Activated T-helper 1 cell treated with anti-CD3 and anti-CD28 coated beads, Interleukin-12 subunit alpha, Interleukin-12 subunit beta, Interleukin-2, Interleukin-4 antibody, amounts not matched to agents 30 ng/mL and 10 ng/mL and 1 ng/mL, durations not matched to agents 14 hours and 24 hours and 36 hours (primary cell): ENCODE measurements at regions of chr9 and their contacts with region 1.

Region 1: GRCh38 chr9:126514047-126514821 is 99.5 kb upstream of the LMX1B start:
- DNase-seq: peak; percentile 42
- H3K4me3 Mint-ChIP-seq: no peak overlapping the region
- H3K27ac Mint-ChIP-seq: no peak overlapping the region
- H3K4me1 Mint-ChIP-seq: peaks cover 31% of the 10 kb centered on the region
- H3K27me3 Mint-ChIP-seq: peaks cover 67% of the 10 kb centered on the region

Region 2: DNA sequence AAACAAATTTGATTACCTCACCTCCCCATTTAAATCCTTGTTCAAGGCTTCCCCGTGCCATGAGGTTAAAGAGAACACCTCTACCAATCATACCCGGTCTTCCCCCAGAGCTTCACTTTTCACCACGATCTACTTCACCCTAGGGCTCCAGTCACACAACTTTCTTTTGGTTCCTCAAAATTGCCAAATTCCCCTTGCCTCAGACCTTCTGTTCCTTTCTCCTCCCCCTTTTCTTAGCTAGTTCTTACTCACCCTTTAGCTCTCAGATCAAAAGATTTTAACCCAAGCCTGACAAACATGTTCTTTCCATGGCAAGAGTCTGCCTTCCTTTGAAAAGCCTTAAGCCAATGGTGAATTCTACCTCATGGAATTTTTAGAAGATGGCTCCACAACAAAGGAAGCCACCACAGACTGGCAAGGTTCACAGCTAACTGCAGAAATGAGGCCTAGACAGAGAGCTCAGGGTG is 863.9 kb before region 1 on chr9:
- intact Hi-C with region 1: loop called (anchors 5 kb)
- DNase-seq: no peak
- H3K4me3 Mint-ChIP-seq: peak overlapping the region; percentile 54
- H3K27ac Mint-ChIP-seq: peak overlapping the region; percentile 85
- H3K4me1 Mint-ChIP-seq: peaks cover 71% of the 10 kb centered on the region
- H3K27me3 Mint-ChIP-seq: no peaks in the 10 kb centered on the region

Region 3: DNA sequence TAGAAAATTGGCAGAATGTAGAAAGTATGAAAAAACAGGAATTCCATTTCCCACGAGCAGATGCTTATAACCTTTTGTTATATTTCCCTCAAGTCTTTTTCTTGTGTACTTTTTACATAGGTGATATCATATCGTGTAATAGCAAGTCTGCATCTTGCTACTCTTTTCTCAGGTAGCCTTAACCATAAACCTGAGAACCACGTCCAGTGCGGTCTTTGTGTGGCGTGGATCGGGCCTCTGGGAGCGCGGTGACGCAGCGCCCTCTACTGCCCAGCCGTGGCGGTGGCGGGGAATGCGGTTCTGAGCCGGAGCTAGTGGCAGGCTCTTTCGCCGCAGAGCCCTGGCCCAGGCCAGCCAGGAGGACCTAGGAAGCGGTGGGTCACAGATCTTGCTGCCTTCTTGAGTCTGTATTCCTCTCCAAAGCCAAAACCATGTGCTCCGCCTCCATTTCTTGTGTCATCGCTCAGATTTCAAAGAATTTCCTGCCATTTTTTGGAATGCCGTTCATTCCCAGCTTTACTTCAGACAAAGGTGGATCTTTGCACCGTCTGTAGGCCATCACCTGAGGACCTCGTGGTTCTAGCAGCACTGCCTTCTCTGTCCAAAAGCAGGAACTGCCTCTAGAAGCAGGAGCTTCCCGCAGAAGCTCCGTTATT is 115.7 kb before region 1 on chr9:
- intact Hi-C with region 1: no loop called
- DNase-seq: peak; percentile 67
- H3K4me3 Mint-ChIP-seq: peak overlapping the region; percentile 19
- H3K27ac Mint-ChIP-seq: no peak overlapping the region
- H3K4me1 Mint-ChIP-seq: peaks cover 64% of the 10 kb centered on the region
- H3K27me3 Mint-ChIP-seq: peaks cover 15% of the 10 kb centered on the region

Region 4: DNA sequence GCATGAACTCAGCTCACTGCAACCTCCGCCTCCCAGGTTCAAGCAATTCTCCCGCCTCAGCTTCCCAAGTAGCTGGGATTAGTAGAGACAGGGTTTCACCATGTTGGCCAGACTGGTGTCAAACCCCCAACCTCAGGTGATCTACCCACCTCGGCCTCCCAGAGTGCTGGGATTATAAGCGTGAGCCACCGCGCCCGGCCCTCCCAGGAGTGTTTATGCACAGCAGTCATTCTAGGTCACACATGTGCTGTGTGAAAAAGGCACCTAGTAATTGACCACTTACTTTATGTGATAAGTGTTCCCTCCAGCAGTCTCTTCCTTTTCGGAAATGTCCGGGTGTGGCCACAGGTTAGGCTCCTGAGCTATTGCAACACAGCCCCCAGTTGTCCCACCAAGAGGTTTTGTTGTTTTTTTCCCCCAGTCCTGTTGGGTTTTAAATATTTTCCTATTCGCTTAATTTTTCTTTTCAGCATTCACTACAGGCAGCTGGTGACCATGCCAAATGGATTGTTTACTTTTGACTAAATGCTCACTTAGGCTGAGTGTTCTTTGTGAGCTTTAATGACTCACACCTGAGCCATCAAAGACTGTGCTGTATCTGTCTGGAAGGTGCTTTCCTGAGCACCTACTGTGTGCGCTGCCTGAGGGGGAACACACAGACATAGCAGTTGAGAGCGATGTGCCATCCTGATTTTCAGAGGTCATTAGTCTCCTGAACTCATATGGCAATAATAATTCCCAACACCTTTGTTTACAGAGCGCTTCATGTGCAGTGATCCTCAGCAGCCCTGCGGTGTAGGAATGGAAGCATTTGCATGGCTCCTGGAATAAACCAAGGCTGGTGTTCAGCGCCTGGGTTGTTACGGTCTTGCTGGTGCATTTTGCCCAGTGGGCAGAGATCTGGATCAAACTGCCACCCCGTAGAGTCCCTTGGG is 93.3 kb before region 1 on chr9:
- intact Hi-C with region 1: no loop called
- DNase-seq: no peak
- H3K4me3 Mint-ChIP-seq: no peak overlapping the region
- H3K27ac Mint-ChIP-seq: no peak overlapping the region
- H3K4me1 Mint-ChIP-seq: no peaks in the 10 kb centered on the region
- H3K27me3 Mint-ChIP-seq: no peaks in the 10 kb centered on the region

Region 5: GRCh38 chr9:126439402-126439765 is 74.8 kb before region 1 on chr9:
- intact Hi-C with region 1: loop called (anchors 1 kb)
- DNase-seq: no peak
- H3K4me3 Mint-ChIP-seq: no peak overlapping the region
- H3K27ac Mint-ChIP-seq: no peak overlapping the region
- H3K4me1 Mint-ChIP-seq: peaks cover 5% of the 10 kb centered on the region
- H3K27me3 Mint-ChIP-seq: peaks cover 11% of the 10 kb centered on the region

Region 6: DNA sequence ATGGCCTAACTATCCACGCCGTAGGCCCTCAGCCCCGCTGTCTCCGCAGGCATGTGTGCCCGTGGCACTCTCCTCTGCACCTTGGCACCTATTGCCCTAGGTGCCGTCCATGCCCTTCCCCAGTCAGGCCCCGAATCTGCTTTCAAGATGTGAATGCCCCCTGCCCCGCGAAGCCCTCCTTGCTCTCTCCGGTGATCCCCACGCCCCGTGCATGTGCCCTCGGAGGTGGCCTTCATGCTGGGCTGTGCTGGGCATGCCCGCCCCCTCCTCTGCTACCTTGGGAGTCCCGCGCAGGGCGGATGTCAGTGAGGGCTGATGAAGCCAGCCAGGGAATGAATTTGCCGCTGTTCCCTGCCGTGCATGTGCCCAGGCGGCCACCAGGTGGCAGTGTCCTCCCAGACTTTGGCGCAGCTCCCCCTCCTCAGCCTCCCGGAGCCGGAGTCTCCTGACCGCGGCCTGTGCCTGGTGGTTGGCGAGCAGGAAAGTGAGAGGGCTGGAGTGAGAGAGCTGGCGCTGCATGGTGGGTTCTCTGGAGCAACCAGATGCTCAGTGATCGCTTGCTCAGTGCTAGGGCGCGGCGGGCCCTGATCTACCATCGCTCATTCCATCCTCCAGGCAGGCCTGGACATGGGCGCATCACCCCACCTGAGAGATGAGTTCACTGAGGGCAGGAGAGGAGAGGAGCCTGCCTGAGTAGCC is 13.4 kb before region 1 on chr9:
- intact Hi-C with region 1: loop called (anchors 1 kb)
- DNase-seq: peak; percentile 41
- H3K4me3 Mint-ChIP-seq: no peak overlapping the region
- H3K27ac Mint-ChIP-seq: no peak overlapping the region
- H3K4me1 Mint-ChIP-seq: no peaks in the 10 kb centered on the region
- H3K27me3 Mint-ChIP-seq: peaks cover 18% of the 10 kb centered on the region

Region 7: DNA sequence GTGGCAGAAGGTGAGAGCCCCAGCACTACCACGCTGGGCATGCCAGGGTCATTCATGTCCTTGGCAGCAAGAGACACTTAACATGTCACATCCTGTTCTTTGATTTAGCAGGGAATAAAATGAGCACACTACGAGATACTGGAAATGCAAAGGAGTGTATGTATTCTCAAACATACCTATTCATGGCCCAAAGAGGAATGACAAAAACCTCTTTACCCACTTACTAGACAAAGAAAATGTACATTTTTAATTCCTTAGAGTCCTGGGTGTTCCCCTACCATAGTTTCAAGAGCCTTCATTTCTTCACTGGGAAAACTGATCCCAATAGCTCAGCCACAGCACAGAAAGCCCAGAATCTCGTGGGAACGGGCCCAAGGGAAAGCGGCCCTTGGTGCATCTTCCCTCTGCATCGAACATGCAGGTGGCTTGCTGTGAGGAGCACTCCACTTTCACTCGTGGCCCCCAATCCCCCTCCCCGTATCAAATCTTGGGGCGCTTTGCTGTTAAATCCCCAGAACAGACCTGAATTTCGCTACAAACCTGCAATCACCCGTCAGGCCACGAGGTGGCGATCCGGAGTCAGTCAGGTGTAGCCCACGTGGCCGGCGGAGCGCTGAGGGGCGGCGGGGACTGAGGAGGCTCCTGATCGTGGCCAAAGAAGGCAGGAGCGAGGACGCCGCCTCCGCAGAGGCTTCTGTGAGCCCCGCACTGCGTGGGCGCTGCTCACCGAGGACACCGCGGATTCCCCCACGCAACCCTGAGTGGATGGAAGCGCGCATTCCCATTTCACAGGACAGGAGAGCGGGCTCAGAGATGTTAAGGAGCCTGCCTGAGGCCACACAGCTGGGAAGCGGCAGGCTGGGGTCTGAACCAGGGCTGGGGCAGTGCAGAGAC is 190.9 kb after region 1 on chr9:
- intact Hi-C with region 1: loop called (anchors 10 kb)
- DNase-seq: peak; percentile 77
- H3K4me3 Mint-ChIP-seq: peak overlapping the region; percentile 47
- H3K27ac Mint-ChIP-seq: no peak overlapping the region
- H3K4me1 Mint-ChIP-seq: peaks cover 15% of the 10 kb centered on the region
- H3K27me3 Mint-ChIP-seq: peaks cover 10% of the 10 kb centered on the region